Esophagus muscularis mucosa (tissue), 4 donors: ENCODE measurements at regions of chr15 and their contacts with region 1.

Region 1: DNA sequence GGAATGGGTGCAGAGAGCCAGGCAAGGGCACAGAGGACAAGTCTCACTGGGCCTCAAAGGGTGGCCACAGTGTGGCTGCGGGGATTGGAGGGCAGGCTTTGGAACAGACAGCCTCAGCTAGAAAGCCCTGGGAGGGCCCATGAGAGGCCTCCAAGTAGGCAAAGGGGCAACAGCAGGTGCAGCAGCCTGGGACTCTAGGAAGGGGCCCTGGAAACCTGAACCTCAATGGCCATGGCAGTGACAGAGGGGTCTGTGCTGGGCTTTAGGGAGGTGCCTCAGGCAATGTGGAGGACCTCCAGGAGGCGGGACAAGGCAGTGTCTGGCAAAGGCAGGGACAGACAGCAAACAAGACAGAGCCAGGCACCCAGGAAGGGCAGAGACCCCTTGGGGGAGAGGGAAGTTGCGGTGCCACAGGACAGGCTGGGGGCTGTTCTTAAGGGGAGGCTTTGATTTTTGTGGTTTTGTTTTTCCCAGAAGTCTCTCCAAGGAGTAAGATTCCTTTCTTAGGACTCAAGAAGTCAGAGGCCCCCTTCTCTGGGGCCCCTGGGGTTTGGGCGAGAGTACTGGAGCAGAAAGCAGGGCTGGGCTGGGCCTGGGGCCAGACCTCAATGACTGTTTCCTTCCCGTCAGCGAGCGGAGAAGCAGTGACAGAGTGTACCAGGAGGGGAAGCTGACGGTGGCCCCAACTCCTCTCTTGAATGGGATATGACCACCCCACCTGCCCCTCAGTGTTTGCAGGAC is 9.7 kb downstream of the STOML1 start:
- DNase-seq: peak; percentile 96
- H3K4me3 ChIP-seq: peak overlapping the region in 2 of 4 donors; percentile 9 to 22
- H3K27ac ChIP-seq: peak overlapping the region; percentile 79 to 92 (median 85)
- H3K4me1 ChIP-seq: peaks cover 62 to 67% (median 64%) of the 10 kb centered on the region in 4 donors
- H3K27me3 ChIP-seq: no peaks in the 10 kb centered on the region
- CTCF ChIP-seq: no peak
- EP300 ChIP-seq: peak; percentile 84
- POLR2A ChIP-seq: no peak

Region 2: DNA sequence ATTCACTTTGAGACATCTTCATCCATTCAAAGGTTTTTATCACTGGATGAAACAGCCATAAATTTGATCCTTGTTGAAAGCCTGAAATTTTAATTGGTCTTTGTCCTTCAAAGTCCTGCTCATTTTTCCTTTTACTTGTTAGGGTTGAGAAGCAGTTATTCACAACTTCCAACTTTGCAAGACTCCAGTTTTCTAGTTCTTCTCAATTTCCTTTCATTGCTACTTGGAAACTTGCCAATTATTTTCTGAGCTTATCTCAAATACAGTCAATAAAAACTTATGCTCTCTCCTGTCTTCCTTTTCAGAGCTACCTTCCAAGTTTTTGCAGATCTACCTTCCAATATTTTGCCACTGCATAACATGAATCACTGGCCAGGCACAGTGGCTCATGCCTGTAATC is 321.9 kb before region 1 on chr15:
- intact Hi-C with region 1: no loop called
- DNase-seq: no peak
- H3K4me3 ChIP-seq: no peak overlapping the region
- H3K27ac ChIP-seq: no peak overlapping the region
- H3K4me1 ChIP-seq: no peaks in the 10 kb centered on the region
- H3K27me3 ChIP-seq: peaks cover 0 to 4% (median 0%) of the 10 kb centered on the region in 4 donors
- CTCF ChIP-seq: no peak
- EP300 ChIP-seq: no peak
- POLR2A ChIP-seq: no peak

Region 3: GRCh38 chr15:74036271-74037170 is 54.1 kb after region 1 on chr15:
- intact Hi-C with region 1: loop called (anchors 5 kb)
- DNase-seq: no peak
- H3K4me3 ChIP-seq: no peak overlapping the region
- H3K27ac ChIP-seq: no peak overlapping the region
- H3K4me1 ChIP-seq: peaks cover 30 to 55% (median 35%) of the 10 kb centered on the region in 4 donors
- H3K27me3 ChIP-seq: no peaks in the 10 kb centered on the region
- CTCF ChIP-seq: peak; percentile 28 to 53 (median 44)
- EP300 ChIP-seq: no peak
- POLR2A ChIP-seq: no peak

Region 4: GRCh38 chr15:74044267-74045110 is 62.1 kb after region 1 on chr15:
- intact Hi-C with region 1: loop called (anchors 5 kb)
- DNase-seq: no peak
- H3K4me3 ChIP-seq: no peak overlapping the region
- H3K27ac ChIP-seq: peak overlapping the region; percentile 51 to 68 (median 54)
- H3K4me1 ChIP-seq: peaks cover 36 to 58% (median 51%) of the 10 kb centered on the region in 4 donors
- H3K27me3 ChIP-seq: no peaks in the 10 kb centered on the region
- CTCF ChIP-seq: no peak
- EP300 ChIP-seq: no peak
- POLR2A ChIP-seq: no peak